Activated T-helper 2 cell treated with anti-CD3 and anti-CD28 coated beads, Interferon-gamma antibody, Interleukin-2, Interleukin-4, amounts not matched to agents 10 μg/mL and 5 μg/mL and 100 μg/mL, durations not matched to agents 14 hours and 24 hours and 36 hours (primary cell): ENCODE measurements at regions of chr5 and their contacts with region 1.

Region 1: GRCh38 chr5:143605403-143606005 is 202.0 kb upstream of the NR3C1 start:
- DNase-seq: peak; percentile 44
- H3K4me3 Mint-ChIP-seq: peak overlapping the region; percentile 68
- H3K27ac Mint-ChIP-seq: peak overlapping the region; percentile 92
- H3K4me1 Mint-ChIP-seq: peaks cover 44% of the 10 kb centered on the region
- H3K27me3 Mint-ChIP-seq: no peaks in the 10 kb centered on the region

Region 2: DNA sequence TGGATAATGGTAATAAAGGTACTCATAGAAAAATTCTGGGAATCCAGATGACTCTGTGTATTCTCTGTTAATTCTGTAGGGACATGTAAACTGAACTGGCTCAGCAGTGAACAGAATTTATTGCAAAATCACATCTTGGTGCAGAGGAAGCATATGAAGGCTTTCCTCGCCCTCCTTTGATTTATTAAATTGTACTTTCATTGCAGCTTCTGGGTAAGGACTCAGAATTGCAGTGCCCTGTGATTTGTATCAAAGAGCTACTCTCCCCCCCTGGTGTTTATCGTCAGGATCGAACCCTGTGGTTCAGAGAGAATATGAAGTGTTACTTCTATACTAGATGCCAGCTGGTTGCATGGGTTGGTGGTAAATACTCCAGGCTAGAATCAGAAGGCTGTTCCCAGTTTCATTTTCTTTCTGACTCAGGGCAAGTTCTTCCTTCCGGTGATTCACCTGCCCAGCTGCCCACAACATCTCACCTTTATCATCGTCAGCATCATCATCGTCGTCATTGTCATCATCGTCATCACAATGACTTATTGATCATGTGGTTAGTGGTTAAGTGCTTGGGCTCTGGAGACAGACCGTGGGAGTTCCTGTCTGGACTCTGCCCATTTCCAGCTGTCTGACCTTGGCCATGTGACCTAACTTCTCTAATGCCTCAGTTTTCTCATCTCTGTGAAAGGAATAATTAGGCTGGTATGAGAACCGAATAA is 596.5 kb before region 1 on chr5:
- intact Hi-C with region 1: loop called (anchors 1 kb)
- DNase-seq: peak; percentile 82
- H3K4me3 Mint-ChIP-seq: peak overlapping the region; percentile 9
- H3K27ac Mint-ChIP-seq: peak overlapping the region; percentile 80
- H3K4me1 Mint-ChIP-seq: peaks cover 76% of the 10 kb centered on the region
- H3K27me3 Mint-ChIP-seq: no peaks in the 10 kb centered on the region

Region 3: GRCh38 chr5:143222287-143223231 is 382.9 kb before region 1 on chr5:
- intact Hi-C with region 1: loop called (anchors 5 kb)
- DNase-seq: peak; percentile 74
- H3K4me3 Mint-ChIP-seq: peak overlapping the region; percentile 43
- H3K27ac Mint-ChIP-seq: peak overlapping the region; percentile 97
- H3K4me1 Mint-ChIP-seq: peaks cover 82% of the 10 kb centered on the region
- H3K27me3 Mint-ChIP-seq: no peaks in the 10 kb centered on the region

Region 4: GRCh38 chr5:143435210-143435657 is 170.3 kb before region 1 on chr5:
- intact Hi-C with region 1: loop called (anchors 5 kb)
- DNase-seq: no peak
- H3K4me3 Mint-ChIP-seq: peak overlapping the region; percentile 80
- H3K27ac Mint-ChIP-seq: peak overlapping the region; percentile 89
- H3K4me1 Mint-ChIP-seq: peaks cover 60% of the 10 kb centered on the region
- H3K27me3 Mint-ChIP-seq: no peaks in the 10 kb centered on the region

Region 5: DNA sequence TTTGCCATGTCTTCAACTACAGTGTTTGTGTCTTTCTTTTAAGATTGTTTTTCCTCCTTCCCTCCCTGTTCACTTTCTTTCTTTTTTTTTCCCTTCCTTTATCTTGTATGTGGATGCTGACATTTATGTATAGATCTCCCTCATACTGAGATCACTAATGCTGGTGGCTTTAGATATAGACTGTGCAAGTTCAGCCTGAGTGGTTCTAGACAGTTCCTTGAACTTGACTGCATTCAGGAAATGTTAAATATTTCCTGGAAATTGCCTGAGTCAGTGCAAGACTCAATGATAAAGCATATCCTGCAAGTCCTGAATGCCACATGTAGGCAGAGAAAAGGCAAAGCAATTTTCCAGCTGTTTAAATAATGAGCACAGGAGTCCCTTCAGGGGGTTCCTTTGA is 19.5 kb before region 1 on chr5:
- intact Hi-C with region 1: loop called (anchors 1 kb)
- DNase-seq: no peak
- H3K4me3 Mint-ChIP-seq: peak overlapping the region; percentile 6
- H3K27ac Mint-ChIP-seq: peak overlapping the region; percentile 71
- H3K4me1 Mint-ChIP-seq: peaks cover 61% of the 10 kb centered on the region
- H3K27me3 Mint-ChIP-seq: no peaks in the 10 kb centered on the region

Region 6: DNA sequence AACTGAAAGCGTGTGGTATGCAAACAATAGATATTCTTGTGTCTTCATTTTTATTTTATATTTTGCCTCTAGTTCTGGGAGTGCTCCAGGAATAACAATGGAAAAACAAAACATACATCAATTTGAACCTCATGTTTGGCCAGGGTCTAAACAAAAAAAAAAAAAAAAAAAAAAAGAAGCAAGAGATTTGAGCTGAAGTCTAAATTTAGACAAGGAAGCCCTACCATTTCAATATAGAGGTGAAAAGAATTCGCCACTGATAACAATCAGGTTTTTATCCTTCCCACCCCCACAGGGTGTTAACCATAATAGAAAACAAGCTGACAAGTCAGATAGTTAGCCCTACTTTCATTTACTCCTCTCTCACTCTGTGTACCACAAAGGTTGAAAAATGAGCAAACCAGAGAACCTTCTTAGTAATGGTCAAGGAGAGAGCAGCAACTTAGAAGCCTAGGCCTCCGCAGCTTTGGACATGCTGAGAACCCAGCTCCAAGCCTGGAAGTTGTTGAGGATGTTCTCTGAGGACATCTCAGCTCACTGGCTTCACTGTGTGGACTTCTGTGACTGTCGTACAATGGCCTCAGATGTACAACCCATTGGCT is 88.2 kb after region 1 on chr5:
- intact Hi-C with region 1: loop called (anchors 1 kb)
- DNase-seq: peak; percentile 11
- H3K4me3 Mint-ChIP-seq: no peak overlapping the region
- H3K27ac Mint-ChIP-seq: peak overlapping the region; percentile 68
- H3K4me1 Mint-ChIP-seq: peaks cover 57% of the 10 kb centered on the region
- H3K27me3 Mint-ChIP-seq: no peaks in the 10 kb centered on the region